Activated B cell treated with CpG ODN at 0.5 μM for 24 hours (primary cell): ENCODE measurements at regions of chr2 and their contacts with region 1.

Region 1: GRCh38 chr2:181241797-181242196 is 215.4 kb upstream of the ITGA4 start:
- DNase-seq: no peak
- ATAC-seq: no peak
- H3K4me3 Mint-ChIP-seq: no peak overlapping the region
- H3K27ac Mint-ChIP-seq: no peak overlapping the region
- H3K4me1 Mint-ChIP-seq: peaks cover 10% of the 10 kb centered on the region
- H3K27me3 Mint-ChIP-seq: no peaks in the 10 kb centered on the region
- CTCF ChIP-seq: no peak

Region 2: GRCh38 chr2:181025004-181025403 is 216.8 kb before region 1 on chr2:
- CTCF ChIA-PET with region 1: no interaction called
- POLR2A ChIA-PET with region 1: no interaction called
- intact Hi-C with region 1: no loop called
- DNase-seq: no peak
- ATAC-seq: no peak
- H3K4me3 Mint-ChIP-seq: no peak overlapping the region
- H3K27ac Mint-ChIP-seq: no peak overlapping the region
- H3K4me1 Mint-ChIP-seq: no peaks in the 10 kb centered on the region
- H3K27me3 Mint-ChIP-seq: no peaks in the 10 kb centered on the region
- CTCF ChIP-seq: no peak

Region 3: GRCh38 chr2:181281206-181281832 is 39.5 kb after region 1 on chr2:
- CTCF ChIA-PET with region 1: no interaction called
- POLR2A ChIA-PET with region 1: no interaction called
- intact Hi-C with region 1: loop called (anchors 5 kb)
- DNase-seq: no peak
- ATAC-seq: no peak
- H3K4me3 Mint-ChIP-seq: no peak overlapping the region
- H3K27ac Mint-ChIP-seq: no peak overlapping the region
- H3K4me1 Mint-ChIP-seq: no peaks in the 10 kb centered on the region
- H3K27me3 Mint-ChIP-seq: no peaks in the 10 kb centered on the region
- CTCF ChIP-seq: no peak